Endothelial cell of umbilical vein (primary cell): ENCODE measurements at regions of chr3 and their contacts with region 1.

Region 1: DNA sequence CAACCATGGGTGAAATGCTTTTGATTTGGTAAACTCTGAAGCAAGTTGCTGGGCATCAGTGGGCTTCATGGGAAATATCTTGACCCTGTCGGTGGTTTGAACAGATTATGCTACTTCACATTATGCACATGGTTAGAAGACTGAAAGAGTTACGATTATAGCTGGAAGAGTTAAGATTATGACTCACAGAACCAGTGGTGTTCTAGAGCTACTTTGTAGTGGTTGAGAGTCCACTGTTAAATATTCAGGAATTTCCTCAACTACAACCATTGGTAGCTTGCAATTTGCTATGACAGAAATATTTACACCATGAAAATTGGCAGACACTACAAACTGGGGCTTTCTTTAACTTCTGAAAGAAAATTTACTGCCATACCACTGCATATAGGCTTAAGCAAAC is 99.3 kb downstream of the GADL1 start:
- DNase-seq: no peak
- H3K4me3 ChIP-seq: no peak overlapping the region
- H3K27ac ChIP-seq: no peak overlapping the region
- H3K4me1 ChIP-seq: no peaks in the 10 kb centered on the region
- H3K27me3 ChIP-seq: peaks cover 11 to 23% of the 10 kb centered on the region in 2 experiments
- CTCF ChIP-seq: no peak
- POLR2A ChIP-seq: no peak

Region 2: GRCh38 chr3:30644593-30645012 is 150.6 kb before region 1 on chr3:
- CTCF ChIA-PET with region 1: no interaction called
- POLR2A ChIA-PET with region 1: no interaction called
- dilution Hi-C with region 1: no loop called
- intact Hi-C with region 1: no loop called
- DNase-seq: peak; percentile 55
- H3K4me3 ChIP-seq: no peak overlapping the region
- H3K27ac ChIP-seq: no peak overlapping the region
- H3K4me1 ChIP-seq: peaks cover 40% of the 10 kb centered on the region
- H3K27me3 ChIP-seq: no peaks in the 10 kb centered on the region
- CTCF ChIP-seq: no peak
- POLR2A ChIP-seq: no peak

Region 3: GRCh38 chr3:30924763-30925162 is 129.6 kb after region 1 on chr3:
- CTCF ChIA-PET with region 1: no interaction called
- POLR2A ChIA-PET with region 1: no interaction called
- dilution Hi-C with region 1: no loop called
- intact Hi-C with region 1: loop called (anchors 10 kb)
- DNase-seq: no peak
- H3K4me3 ChIP-seq: no peak overlapping the region
- H3K27ac ChIP-seq: no peak overlapping the region
- H3K4me1 ChIP-seq: no peaks in the 10 kb centered on the region
- H3K27me3 ChIP-seq: peaks cover 0 to 6% of the 10 kb centered on the region in 2 experiments
- CTCF ChIP-seq: no peak
- POLR2A ChIP-seq: no peak